ENCODE measurements at regions of chr4 and their contacts with region 1.

Region 1: DNA sequence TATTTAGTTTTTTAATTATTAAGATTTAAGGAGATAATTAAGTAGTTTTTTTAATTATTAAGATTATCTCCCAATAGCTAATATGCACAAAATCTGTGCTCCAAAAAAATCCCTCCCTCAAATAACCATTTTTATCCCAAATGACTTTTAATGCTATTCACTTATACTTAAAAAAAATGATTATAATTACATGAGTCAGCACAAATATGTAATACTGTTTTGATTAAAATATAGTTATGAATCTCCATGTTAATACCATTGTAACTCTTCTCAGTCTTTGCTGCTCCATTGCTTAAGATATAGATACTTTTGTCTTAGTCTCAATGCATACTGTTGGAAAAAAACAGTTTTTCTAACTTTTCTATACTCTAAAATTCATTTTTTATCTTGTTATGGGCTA is 1121.1 kb upstream of the ADGRL3 start:
- DNase-seq: no peak
- ATAC-seq: no peak
- H3K4me3 ChIP-seq: no peak overlapping the region
- H3K4me3 Mint-ChIP-seq: no peak overlapping the region
- H3K27ac ChIP-seq: no peak overlapping the region
- H3K27ac Mint-ChIP-seq: no peak overlapping the region
- H3K4me1 ChIP-seq: no peaks in the 10 kb centered on the region
- H3K4me1 Mint-ChIP-seq: no peaks in the 10 kb centered on the region
- H3K27me3 ChIP-seq: no peaks in the 10 kb centered on the region
- H3K27me3 Mint-ChIP-seq: no peaks in the 10 kb centered on the region

Region 2: GRCh38 chr4:60133375-60133774 is 54.4 kb after region 1 on chr4:
- CTCF ChIA-PET with region 1: no interaction called
- POLR2A ChIA-PET with region 1: no interaction called
- intact Hi-C with region 1: loop called in 1 of 2 experiments (anchors 10 kb)
- DNase-seq: no peak
- ATAC-seq: no peak
- H3K4me3 ChIP-seq: no peak overlapping the region
- H3K4me3 Mint-ChIP-seq: no peak overlapping the region
- H3K27ac ChIP-seq: no peak overlapping the region
- H3K27ac Mint-ChIP-seq: no peak overlapping the region
- H3K4me1 ChIP-seq: no peaks in the 10 kb centered on the region
- H3K4me1 Mint-ChIP-seq: no peaks in the 10 kb centered on the region
- H3K27me3 ChIP-seq: no peaks in the 10 kb centered on the region
- H3K27me3 Mint-ChIP-seq: no peaks in the 10 kb centered on the region